Ascending aorta (tissue), 2 donors: ENCODE measurements at regions of chr19 and their contacts with region 1.

Region 1: DNA sequence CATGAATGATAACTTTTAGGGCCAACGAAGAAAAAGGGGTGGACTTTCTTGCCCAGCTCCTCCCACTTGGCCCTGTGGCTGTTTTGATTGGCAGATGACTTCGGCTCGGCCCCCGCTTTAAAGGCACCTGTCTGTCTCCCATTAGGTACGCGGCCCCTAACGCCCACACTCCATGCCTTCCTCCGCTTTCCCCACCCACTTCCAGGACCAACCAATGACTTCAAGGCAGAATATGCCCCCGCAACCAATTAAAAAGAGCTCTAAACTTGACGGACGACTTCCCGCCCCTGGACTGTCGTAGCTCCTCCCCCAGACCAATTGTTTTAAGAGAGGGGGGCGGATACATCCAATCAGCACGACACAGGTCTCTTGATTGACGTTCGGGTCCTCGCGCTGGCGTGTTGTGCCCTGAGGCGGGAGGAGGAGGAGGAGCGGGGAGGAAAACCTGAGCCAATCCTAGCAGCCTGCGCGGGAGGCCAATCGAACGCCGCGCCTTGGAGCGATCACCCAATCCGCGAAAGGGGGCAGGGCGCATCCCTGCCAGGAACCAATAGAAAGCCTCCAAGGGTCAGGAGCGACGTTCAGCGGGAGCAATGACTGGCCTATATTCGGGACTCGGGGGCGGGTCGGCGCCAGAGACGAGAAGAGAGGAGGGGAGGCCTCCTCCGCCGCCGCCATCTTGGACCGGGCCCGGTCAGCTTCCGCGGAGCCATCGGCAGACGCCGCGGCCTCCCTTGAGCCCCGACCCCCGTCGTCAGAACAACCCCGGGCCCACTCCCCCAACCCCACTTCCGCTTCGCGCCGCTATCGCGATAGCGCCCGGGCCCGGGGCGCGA is at the start of gene CNOT3:
- DNase-seq: peak; percentile 100
- H3K4me3 ChIP-seq: peak within 1 kb of the TSS; percentile 95 to 98
- H3K27ac ChIP-seq: peak within 1 kb of the TSS; percentile 96 to 98
- H3K4me1 ChIP-seq: peaks cover 0 to 15% of the 10 kb centered on the region in 2 donors
- H3K27me3 ChIP-seq: no peaks in the 10 kb centered on the region
- CTCF ChIP-seq: no peak
- total RNA-seq, gene CNOT3: 69.1 TPM

Region 2: DNA sequence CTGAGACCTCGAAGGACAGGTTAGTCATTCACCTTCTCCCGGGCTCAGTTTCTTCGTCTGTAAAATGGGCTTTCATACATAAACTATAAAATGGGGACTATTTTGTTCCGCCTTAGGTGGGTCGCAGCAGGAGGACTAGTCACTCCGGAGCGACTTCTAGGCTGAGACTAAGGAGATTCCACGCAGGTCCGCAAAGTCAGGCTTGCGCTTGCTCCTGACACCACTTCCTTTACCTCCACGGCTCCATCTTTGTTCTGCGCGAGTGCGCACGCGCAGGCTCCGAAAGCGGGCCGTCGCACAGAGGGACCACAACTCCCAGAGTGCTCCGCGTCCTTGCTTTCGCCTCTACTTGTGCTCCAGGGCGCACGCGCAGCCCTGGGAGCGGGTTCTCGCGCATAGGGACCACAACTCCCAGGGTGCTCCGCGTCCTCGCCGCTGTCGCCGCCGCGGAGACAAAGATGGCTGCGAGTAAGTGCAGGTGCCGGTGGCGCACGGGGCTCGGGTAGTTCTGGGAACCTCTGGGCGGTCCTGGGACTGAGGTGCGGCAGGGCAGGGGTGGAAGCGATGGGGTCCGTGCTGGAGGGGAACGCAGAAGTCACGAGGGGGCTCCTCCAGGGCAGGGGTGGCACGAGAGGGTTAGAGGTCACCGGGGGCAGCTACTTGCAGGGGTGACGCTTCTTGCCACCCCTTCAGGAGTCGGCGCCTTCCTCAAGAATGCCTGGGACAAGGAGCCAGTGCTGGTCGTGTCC is 34.7 kb before region 1 on chr19 and contains the start of gene NDUFA3:
- intact Hi-C with region 1: loop called (anchors 1 kb)
- DNase-seq: peak; percentile 97 to 99
- H3K4me3 ChIP-seq: peak within 1 kb of the TSS; percentile 72 to 83
- H3K27ac ChIP-seq: peak within 1 kb of the TSS in 1 of 2 donors; percentile 67
- H3K4me1 ChIP-seq: peaks cover 0 to 7% of the 10 kb centered on the region in 2 donors
- H3K27me3 ChIP-seq: no peaks in the 10 kb centered on the region
- CTCF ChIP-seq: no peak
- total RNA-seq, gene NDUFA3: 12.5 TPM

Region 3: GRCh38 chr19:54115109-54116063 is 21.9 kb before region 1 on chr19 and contains the starts of genes PRPF31 and TFPT:
- intact Hi-C with region 1: loop called (anchors 1 kb)
- DNase-seq: peak; percentile 85 to 99
- H3K4me3 ChIP-seq: peak within 1 kb of the TSS; percentile 95 to 96
- H3K27ac ChIP-seq: peak within 1 kb of the TSS; percentile 91 to 94
- H3K4me1 ChIP-seq: peaks cover 12 to 24% of the 10 kb centered on the region in 2 donors
- H3K27me3 ChIP-seq: no peaks in the 10 kb centered on the region
- CTCF ChIP-seq: no peak
- total RNA-seq, gene PRPF31: 84.1 TPM
- total RNA-seq, gene TFPT: 10.6 TPM

Region 4: DNA sequence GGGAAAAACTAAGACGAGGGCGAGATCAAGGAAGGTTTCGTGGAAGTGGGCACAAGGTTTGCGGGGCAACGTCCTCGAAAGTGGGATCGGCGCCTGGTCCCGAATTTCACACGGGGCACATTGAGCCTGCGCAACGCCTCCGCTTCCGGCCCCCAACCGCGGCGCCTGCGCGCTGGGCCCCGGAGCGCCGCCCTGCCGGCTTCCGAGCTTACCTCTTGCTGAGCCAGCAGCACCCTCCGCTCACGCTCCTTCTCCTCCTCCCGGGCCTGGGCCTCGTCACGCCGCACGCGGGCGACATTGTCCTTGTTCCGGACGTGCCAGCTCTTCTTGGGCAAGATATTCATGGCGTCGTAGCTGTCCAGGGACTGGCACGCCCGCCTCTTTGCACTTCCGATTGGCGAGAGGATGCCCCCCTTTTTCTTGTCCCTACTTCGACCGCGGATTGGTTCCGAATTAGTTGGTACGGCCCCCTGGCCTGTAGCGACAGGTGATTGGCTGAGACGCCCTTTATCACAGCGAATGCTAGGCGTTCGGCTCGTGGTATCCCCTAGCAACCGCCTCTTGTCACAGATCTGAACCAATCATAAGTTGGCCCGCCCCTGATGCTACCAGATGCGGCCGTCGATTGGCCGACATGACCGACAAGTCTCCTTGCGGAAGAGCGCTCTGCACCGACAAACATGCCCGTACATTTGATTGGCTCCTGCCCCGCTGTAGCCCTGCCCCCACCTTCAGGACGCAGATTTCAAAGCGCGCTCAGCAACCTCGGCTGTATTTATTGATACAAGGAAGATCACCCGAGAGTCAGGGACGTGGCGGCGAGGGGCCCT is 22.3 kb after region 1 on chr19 and contains the start of gene LENG1:
- intact Hi-C with region 1: loop called (anchors 1 kb)
- DNase-seq: peak; percentile 100
- H3K4me3 ChIP-seq: peak within 1 kb of the TSS; percentile 65 to 83
- H3K27ac ChIP-seq: peak within 1 kb of the TSS; percentile 89 to 93
- H3K4me1 ChIP-seq: peaks cover 15 to 21% of the 10 kb centered on the region in 2 donors
- H3K27me3 ChIP-seq: peaks cover 4% of the 10 kb centered on the region
- CTCF ChIP-seq: peak; percentile 28 to 49 (median 36)
- total RNA-seq, gene LENG1: 2.7 TPM

Region 5: DNA sequence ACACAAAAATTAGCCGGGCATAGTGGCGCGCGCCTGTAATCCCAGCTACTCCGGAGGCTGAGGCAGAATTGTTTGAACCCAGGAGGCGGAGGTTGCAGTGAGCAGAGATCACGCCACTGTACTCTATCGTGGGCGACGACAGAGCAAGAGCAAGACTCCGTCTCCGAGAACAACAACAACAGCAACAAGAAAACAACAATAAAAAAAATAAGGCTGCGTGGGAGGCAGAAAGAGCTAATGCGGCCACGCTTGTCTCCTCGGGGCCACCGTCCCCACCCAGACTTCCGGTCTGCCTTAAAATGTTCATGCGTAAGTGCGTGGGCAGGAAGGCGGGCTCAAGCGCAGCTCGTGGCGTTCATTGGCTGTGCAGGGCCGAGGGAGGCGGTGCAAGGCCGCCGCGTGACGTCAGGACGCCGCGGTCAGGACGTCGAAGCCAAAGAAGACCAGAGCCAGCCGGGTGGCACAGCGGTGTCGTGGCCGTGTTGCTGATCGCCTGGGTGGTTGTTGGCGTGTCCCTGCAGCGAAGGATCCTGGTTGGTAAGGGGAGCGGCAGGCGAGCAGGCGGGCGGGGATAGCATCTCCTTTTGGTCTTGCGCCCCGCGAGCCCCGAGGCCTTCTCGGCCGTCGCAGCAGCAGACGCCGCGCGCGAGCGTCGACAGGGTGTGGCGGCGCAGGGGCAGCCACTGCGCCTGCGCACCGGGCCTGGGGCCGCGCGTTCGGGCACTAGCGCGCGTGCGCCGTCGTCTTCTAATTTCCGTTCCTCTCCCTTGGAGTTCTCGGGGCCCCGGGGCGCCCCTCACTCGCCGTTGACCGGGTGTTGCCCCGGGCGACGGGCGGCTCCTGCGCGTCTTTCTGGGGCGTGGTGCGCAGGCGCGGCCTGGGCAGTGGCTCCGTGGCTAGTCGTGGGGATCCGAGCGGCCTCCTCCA is 311.7 kb after region 1 on chr19 and contains the start of gene LENG8:
- intact Hi-C with region 1: loop called (anchors 1 kb)
- DNase-seq: peak; percentile 92 to 99
- H3K4me3 ChIP-seq: peak within 1 kb of the TSS; percentile 83 to 97
- H3K27ac ChIP-seq: peak within 1 kb of the TSS; percentile 86 to 97
- H3K4me1 ChIP-seq: peaks cover 11 to 39% of the 10 kb centered on the region in 2 donors
- H3K27me3 ChIP-seq: no peaks in the 10 kb centered on the region
- CTCF ChIP-seq: no peak
- total RNA-seq, gene LENG8: 402 TPM